Left ventricle myocardium superior (tissue), 1 donor: ENCODE measurements at regions of chr1 and their contacts with region 1.

Region 1: GRCh38 chr1:100443811-100444571 is 91.7 kb downstream of the CDC14A start:
- DNase-seq: no peak
- ATAC-seq: peak; percentile 31

Region 2: DNA sequence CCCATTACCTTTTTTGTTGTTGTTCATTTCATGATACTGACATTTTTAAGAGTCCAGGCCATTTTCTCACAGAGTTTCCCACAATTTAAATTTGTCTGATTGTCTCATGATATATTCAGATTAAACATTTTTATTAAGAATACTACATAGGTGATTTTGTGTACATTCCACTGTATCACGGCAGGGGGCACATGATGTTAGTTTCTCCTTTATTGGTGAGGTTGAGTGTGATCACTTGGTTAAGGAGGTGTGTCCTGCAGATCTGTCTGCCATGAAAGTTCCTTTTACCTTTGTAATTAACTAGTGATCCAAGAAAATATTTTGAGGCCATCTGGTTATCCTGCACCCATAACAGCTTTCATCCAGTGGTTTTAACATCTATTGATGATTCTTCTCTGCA is 166.1 kb before region 1 on chr1:
- intact Hi-C with region 1: loop called (anchors 10 kb)
- DNase-seq: no peak
- ATAC-seq: no peak